Calu3 (cell line): ENCODE measurements at regions of chr6 and their contacts with region 1.

Region 1: GRCh38 chr6:118551063-118552053 is 3.3 kb downstream of the PLN start:
- DNase-seq: peak; percentile 16
- H3K4me3 Mint-ChIP-seq: no peak overlapping the region
- H3K27ac Mint-ChIP-seq: no peak overlapping the region
- H3K4me1 Mint-ChIP-seq: peaks cover 5% of the 10 kb centered on the region
- H3K27me3 Mint-ChIP-seq: no peaks in the 10 kb centered on the region
- CTCF ChIP-seq: peak; percentile 15

Region 2: GRCh38 chr6:118509009-118509617 is 42.2 kb before region 1 on chr6:
- CTCF ChIA-PET with region 1: no interaction called
- intact Hi-C with region 1: loop called (anchors 2 kb)
- DNase-seq: peak; percentile 34
- H3K4me3 Mint-ChIP-seq: no peak overlapping the region
- H3K27ac Mint-ChIP-seq: no peak overlapping the region
- H3K4me1 Mint-ChIP-seq: no peaks in the 10 kb centered on the region
- H3K27me3 Mint-ChIP-seq: no peaks in the 10 kb centered on the region
- CTCF ChIP-seq: no peak

Region 3: GRCh38 chr6:118537574-118537973 is 13.8 kb before region 1 on chr6:
- CTCF ChIA-PET with region 1: no interaction called
- intact Hi-C with region 1: no loop called
- DNase-seq: no peak
- H3K4me3 Mint-ChIP-seq: no peak overlapping the region
- H3K27ac Mint-ChIP-seq: no peak overlapping the region
- H3K4me1 Mint-ChIP-seq: no peaks in the 10 kb centered on the region
- H3K27me3 Mint-ChIP-seq: no peaks in the 10 kb centered on the region
- CTCF ChIP-seq: no peak

Region 4: DNA sequence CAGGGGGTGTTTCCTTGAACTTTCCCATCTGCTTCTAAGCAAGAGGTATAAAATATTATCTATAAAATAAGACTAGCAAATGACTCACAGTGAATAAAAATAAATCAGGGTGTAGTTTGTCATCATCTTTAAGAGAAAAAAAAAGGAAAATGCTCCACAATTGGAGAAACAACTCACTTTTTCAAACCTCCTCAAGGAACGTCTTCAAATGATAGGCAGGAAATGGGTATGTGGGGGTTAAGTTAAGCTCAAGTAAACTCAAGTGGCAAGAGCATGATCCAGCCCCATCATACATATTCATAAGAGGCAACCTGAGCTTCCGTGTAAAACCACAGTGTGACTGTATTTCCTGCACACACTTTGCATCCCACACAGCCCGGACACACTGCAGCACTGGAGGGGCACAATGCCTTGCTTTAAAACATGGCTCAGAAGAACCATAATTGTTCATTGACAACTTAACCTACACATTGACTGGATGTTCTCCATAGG is 158.5 kb after region 1 on chr6:
- CTCF ChIA-PET with region 1: no interaction called
- intact Hi-C with region 1: no loop called
- DNase-seq: peak; percentile 12
- H3K4me3 Mint-ChIP-seq: peak overlapping the region; percentile 78
- H3K27ac Mint-ChIP-seq: no peak overlapping the region
- H3K4me1 Mint-ChIP-seq: peaks cover 34% of the 10 kb centered on the region
- H3K27me3 Mint-ChIP-seq: no peaks in the 10 kb centered on the region
- CTCF ChIP-seq: no peak

Region 5: DNA sequence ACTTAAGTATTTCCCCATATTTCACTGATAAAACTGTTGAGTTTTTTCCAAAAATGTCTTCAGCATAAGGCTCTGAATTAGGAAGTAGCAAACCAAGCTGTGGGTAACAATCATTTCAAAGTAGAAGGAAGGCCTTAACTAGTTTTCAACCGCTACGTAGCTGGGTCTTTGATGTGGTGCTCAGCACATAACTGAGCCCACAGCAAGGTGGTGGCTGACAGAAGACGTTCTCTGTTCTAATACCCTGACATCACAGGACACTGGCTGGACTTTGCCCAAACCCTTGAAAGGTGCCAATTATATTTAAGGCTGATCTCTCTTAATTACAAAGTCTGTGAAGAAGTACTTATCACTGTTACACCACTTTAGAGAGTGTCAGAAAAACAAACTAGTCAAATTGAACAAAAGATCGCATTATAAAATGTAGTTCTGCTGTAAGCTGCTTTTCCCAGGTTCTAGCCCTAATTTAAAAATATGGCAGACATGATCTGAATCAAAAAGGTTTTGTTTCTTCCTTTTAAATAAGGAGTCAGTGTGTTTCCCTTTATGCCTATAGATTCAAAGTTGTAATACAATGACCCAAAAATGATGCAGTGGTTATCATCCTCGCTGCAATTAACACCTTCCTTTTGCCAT is 771.5 kb after region 1 on chr6:
- CTCF ChIA-PET with region 1: no interaction called
- intact Hi-C with region 1: no loop called
- DNase-seq: no peak
- H3K4me3 Mint-ChIP-seq: no peak overlapping the region
- H3K27ac Mint-ChIP-seq: no peak overlapping the region
- H3K4me1 Mint-ChIP-seq: peaks cover 12% of the 10 kb centered on the region
- H3K27me3 Mint-ChIP-seq: no peaks in the 10 kb centered on the region
- CTCF ChIP-seq: no peak